ENCODE measurements at regions of chr1 and their contacts with region 1.

Region 1: DNA sequence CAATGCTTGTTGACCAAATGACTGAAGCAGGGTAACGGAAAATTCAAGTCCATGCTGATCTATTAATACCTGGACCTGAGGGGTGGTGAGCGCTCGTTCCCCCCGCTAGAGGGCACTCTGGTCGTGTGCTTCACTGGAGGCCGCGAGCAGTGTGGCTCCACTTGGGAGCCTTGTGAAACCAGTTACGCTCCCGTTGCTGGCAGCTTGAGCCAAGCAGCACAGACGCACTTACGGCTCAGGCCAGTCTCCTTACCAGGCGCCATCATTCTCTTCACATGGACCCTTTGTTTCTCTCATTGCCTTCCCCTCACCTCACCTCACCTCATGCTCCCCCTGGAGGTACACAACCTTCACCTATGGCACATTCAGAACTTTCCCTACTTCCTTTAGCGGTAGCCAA is 49.7 kb upstream of the TSPAN2 start:
- DNase-seq: peak; percentile 90
- H3K4me3 Mint-ChIP-seq: no peak overlapping the region
- H3K27ac Mint-ChIP-seq: no peak overlapping the region
- H3K4me1 Mint-ChIP-seq: peaks cover 38% of the 10 kb centered on the region
- H3K27me3 Mint-ChIP-seq: no peaks in the 10 kb centered on the region
- CTCF ChIP-seq: peak; percentile 86

Region 2: DNA sequence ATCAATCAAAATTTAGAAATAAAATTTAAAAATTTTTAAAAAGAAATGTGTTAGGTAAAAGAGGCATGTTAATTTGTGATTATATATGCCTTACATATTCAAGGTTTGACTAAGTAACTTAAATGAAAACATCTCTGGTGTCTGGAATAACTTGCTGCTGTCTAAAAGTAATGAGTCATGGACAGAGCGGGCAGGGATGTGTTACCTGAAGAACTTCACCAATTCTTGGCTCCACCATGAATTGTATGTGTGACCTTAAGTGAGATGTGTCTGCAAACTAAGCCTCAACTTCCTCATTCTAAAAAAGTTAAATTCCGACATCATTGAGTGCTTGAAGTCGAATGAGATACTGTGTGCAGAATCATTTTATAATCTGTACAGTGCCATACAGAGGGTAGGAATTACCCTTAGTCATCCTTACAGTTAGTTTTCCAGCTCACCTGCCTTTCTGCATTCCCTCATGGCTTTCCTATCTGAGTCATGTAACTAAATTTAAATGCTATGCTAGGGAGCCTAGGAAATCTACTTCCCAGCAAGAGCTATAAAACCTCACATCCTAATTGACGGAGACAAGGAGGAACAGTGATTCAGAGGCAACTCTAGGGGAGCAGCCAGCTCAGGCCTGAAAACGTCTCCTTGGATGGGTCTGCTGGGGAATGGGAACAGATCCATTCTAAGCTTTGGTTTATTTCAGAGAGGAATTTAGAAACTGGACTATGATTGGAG is 51.0 kb after region 1 on chr1:
- CTCF ChIA-PET with region 1: interaction called, 7 read pairs
- POLR2A ChIA-PET with region 1: no interaction called
- intact Hi-C with region 1: loop called (anchors 5 kb)
- DNase-seq: peak; percentile 80
- H3K4me3 Mint-ChIP-seq: no peak overlapping the region
- H3K27ac Mint-ChIP-seq: peak overlapping the region; percentile 39
- H3K4me1 Mint-ChIP-seq: peaks cover 17% of the 10 kb centered on the region
- H3K27me3 Mint-ChIP-seq: no peaks in the 10 kb centered on the region
- CTCF ChIP-seq: no peak

Region 3: GRCh38 chr1:115456441-115456961 is 317.5 kb after region 1 on chr1:
- CTCF ChIA-PET with region 1: interaction called, 382 read pairs
- POLR2A ChIA-PET with region 1: no interaction called
- intact Hi-C with region 1: no loop called
- DNase-seq: no peak
- H3K4me3 Mint-ChIP-seq: no peak overlapping the region
- H3K27ac Mint-ChIP-seq: peak overlapping the region; percentile 65
- H3K4me1 Mint-ChIP-seq: peaks cover 11% of the 10 kb centered on the region
- H3K27me3 Mint-ChIP-seq: no peaks in the 10 kb centered on the region
- CTCF ChIP-seq: no peak

Region 4: DNA sequence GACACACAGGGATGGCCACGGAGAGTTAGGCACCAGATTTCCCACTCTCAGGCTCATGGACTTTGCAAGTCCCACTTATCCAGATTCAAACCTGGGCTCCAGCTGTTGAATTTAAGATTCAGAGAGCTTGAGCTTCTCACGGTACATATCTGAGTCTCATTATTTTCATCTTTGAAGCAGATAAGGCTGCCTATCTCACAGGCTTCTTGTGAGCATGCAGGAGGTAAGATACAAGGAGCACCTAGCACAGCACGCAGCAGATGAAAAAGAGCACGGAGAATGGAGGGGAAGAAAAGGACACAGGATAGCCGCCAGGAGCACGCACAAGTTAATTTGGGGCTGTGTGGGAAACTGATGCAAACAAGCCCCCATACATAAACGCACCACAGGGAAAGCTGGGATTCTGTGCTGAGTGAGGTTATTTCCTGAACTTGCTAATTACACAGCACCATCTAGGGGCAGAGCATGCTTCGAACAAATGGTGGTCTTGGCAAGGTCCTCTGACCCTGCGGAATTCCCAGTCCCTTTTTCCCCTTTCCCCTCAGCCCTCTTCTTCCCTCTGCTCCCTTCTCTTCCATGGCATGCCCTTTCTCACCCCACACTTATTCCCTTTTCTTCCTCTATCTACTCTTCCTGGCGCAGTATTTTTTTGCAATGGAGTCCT is 368.1 kb after region 1 on chr1:
- CTCF ChIA-PET with region 1: interaction called, 4 read pairs
- POLR2A ChIA-PET with region 1: no interaction called
- intact Hi-C with region 1: loop called (anchors 1 kb)
- DNase-seq: peak; percentile 48
- H3K4me3 Mint-ChIP-seq: no peak overlapping the region
- H3K27ac Mint-ChIP-seq: no peak overlapping the region
- H3K4me1 Mint-ChIP-seq: no peaks in the 10 kb centered on the region
- H3K27me3 Mint-ChIP-seq: no peaks in the 10 kb centered on the region
- CTCF ChIP-seq: peak; percentile 36

Region 5: DNA sequence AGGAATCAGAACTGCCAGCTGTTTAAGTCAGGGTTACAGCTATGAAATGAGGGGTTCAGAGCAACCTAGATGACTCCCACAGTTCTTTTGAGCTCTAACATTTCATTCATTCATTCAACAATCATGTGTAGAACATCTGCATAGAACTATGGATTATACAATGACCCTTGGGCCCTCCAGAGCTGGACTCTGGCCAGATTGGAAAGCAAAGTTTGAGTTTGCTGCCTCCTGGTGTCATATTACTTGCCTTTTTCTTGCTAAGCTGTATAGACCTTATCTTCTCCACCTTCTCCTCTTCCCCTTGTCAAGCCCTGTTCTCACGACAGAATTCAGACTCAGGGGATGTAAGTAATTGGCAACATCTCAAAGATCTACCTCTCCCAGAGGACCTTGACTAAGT is 625.6 kb after region 1 on chr1:
- CTCF ChIA-PET with region 1: interaction called, 23 read pairs
- POLR2A ChIA-PET with region 1: no interaction called
- intact Hi-C with region 1: no loop called
- DNase-seq: peak; percentile 68
- H3K4me3 Mint-ChIP-seq: no peak overlapping the region
- H3K27ac Mint-ChIP-seq: no peak overlapping the region
- H3K4me1 Mint-ChIP-seq: no peaks in the 10 kb centered on the region
- H3K27me3 Mint-ChIP-seq: no peaks in the 10 kb centered on the region
- CTCF ChIP-seq: peak; percentile 63